ENCODE measurements at regions of chr13 and their contacts with region 1.

Region 1: DNA sequence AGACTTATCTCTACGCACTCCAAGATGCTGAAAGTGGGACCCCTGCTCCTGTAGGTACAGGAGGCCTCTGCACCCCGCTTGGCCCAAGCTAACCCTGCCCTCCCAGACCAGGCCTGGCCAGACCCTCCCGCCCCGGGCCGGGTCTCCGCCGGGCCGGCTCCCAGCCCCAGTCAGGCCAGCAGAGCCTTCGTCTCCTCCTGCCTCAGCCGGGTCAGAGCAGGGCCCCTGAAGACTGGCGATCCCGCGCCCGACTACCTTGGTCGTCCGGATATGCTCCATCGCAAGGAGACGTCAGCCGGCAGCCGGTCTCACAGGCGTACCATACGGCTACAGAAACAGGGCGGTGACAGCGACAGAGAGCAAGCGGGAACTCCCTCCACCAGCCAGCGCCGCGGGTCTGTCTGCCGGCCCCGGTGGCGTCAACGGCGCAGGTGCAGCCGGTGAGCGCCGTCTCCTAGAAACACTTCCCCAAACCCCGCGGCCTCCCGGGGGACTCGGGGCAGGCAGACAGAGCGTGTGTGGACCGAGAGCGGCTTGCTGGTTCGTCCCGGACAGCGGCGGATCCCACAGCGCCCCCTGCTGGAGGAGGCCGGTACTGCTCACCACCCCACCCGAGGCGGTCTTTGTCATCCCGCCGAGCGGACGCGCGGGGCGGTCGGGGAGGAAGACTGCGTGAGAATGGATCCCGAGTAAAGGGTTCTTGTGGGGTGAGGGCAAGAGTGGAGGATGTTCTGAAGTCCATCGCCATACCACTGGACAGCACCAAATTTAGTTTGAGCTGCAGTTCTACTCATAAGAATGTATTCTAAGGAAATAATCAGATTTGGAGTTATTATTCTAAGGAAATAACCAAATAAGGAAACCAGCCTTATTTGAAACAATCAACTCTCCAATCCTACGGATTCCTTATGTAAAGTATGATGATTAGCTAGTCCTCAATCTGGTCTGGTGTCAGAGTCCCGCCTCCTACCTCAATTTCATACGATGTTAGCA is at the start of gene MTMR6:
- DNase-seq: peak; percentile 81 to 96 (median 89)
- ATAC-seq: peak; percentile 87 to 95 (median 90)
- H3K4me3 ChIP-seq: peak within 1 kb of the TSS; percentile 91 to 94
- H3K4me3 Mint-ChIP-seq: peak within 1 kb of the TSS; percentile 88 to 100 (median 91)
- H3K27ac ChIP-seq: peak within 1 kb of the TSS; percentile 93
- H3K27ac Mint-ChIP-seq: peak within 1 kb of the TSS; percentile 86 to 95
- H3K4me1 ChIP-seq: peaks cover 11 to 13% of the 10 kb centered on the region in 2 experiments
- H3K4me1 Mint-ChIP-seq: peaks cover 42 to 57% (median 53%) of the 10 kb centered on the region in 3 donors
- H3K27me3 ChIP-seq: no peaks in the 10 kb centered on the region
- H3K27me3 Mint-ChIP-seq: peaks cover 0 to 9% of the 10 kb centered on the region in 2 donors
- total RNA-seq, gene MTMR6: 15.6 to 19.2 (median 16.3) TPM

Region 2: DNA sequence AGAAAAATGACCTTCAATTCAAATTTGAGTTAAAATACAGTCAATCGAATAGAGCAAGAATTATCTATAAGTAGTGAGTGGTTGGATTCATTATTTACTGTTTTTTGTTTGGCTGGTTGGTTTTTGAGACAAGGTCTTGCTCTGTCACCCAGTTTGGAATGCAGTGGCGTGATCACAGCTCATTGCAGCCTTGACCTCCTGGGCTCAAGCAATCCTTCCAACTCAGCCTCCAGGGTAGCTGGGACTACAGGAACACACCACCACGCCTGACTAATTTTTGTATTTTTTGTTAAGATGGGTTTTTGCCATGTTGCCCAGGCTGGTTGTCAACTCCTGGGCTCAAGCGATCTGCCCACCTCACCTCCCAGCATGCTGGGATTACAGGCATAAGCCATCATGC is 25.0 kb before region 1 on chr13:
- CTCF ChIA-PET with region 1: interaction called, 4 read pairs
- POLR2A ChIA-PET with region 1: interaction called, 4 to 11 read pairs
- DNase-seq: no peak
- ATAC-seq: no peak
- H3K4me3 ChIP-seq: no peak overlapping the region
- H3K4me3 Mint-ChIP-seq: no peak overlapping the region
- H3K27ac ChIP-seq: no peak overlapping the region
- H3K27ac Mint-ChIP-seq: no peak overlapping the region
- H3K4me1 ChIP-seq: no peaks in the 10 kb centered on the region
- H3K4me1 Mint-ChIP-seq: no peaks in the 10 kb centered on the region
- H3K27me3 ChIP-seq: no peaks in the 10 kb centered on the region
- H3K27me3 Mint-ChIP-seq: no peaks in the 10 kb centered on the region